ENCODE measurements at regions of chr10 and their contacts with region 1.

Region 1: GRCh38 chr10:35409094-35409582 is 72.8 kb downstream of the CCNY start:
- DNase-seq: peak in 1 of 2 experiments; percentile 30
- H3K4me3 ChIP-seq: no peak overlapping the region
- H3K27ac ChIP-seq: no peak overlapping the region
- H3K4me1 ChIP-seq: peaks cover 26% of the 10 kb centered on the region
- H3K27me3 ChIP-seq: no peaks in the 10 kb centered on the region
- CTCF ChIP-seq: no peak

Region 2: GRCh38 chr10:35372329-35372728 is 36.8 kb before region 1 on chr10:
- CTCF ChIA-PET with region 1: no interaction called
- POLR2A ChIA-PET with region 1: interaction called, 4 read pairs
- intact Hi-C with region 1: loop called (anchors 5 kb)
- DNase-seq: peak in 1 of 2 experiments; percentile 71
- H3K4me3 ChIP-seq: no peak overlapping the region
- H3K27ac ChIP-seq: no peak overlapping the region
- H3K4me1 ChIP-seq: no peaks in the 10 kb centered on the region
- H3K27me3 ChIP-seq: no peaks in the 10 kb centered on the region
- CTCF ChIP-seq: no peak

Region 3: DNA sequence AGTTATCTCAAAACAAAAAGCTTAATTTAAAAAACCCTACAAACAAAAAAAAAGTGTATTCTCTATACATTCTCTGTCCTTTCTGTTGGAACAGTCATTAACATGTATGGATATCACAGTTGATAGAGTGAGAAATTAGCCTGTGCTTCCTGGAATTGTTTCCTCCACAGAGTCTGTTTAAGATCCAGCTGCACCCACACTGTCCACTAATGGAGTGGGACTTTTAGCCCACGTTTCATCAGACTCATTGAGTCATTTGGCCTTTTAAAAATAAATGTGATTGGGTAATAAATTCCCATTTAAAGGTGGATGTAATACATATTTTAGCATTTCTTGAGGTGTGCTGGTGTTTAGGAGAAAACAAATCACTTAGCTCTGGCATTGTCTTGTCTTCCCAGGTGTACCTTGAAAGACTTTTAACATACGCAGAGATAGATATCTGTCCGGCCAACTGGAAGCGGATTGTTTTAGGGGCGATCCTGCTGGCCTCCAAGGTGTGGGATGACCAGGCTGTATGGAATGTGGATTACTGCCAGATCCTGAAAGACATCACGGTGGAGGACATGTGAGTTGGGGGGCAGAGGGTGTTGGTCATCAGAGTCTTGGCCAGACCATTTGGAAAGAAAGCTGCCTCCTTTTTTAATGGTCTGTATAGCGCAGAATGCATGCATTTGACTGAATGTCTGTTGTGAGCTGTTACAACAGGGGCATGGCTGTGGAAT is 143.6 kb after region 1 on chr10:
- CTCF ChIA-PET with region 1: no interaction called
- POLR2A ChIA-PET with region 1: no interaction called
- intact Hi-C with region 1: loop called (anchors 2 kb)
- DNase-seq: peak; percentile 35 to 74
- H3K4me3 ChIP-seq: no peak overlapping the region
- H3K27ac ChIP-seq: no peak overlapping the region
- H3K4me1 ChIP-seq: peaks cover 7% of the 10 kb centered on the region
- H3K27me3 ChIP-seq: no peaks in the 10 kb centered on the region
- CTCF ChIP-seq: no peak

Region 4: DNA sequence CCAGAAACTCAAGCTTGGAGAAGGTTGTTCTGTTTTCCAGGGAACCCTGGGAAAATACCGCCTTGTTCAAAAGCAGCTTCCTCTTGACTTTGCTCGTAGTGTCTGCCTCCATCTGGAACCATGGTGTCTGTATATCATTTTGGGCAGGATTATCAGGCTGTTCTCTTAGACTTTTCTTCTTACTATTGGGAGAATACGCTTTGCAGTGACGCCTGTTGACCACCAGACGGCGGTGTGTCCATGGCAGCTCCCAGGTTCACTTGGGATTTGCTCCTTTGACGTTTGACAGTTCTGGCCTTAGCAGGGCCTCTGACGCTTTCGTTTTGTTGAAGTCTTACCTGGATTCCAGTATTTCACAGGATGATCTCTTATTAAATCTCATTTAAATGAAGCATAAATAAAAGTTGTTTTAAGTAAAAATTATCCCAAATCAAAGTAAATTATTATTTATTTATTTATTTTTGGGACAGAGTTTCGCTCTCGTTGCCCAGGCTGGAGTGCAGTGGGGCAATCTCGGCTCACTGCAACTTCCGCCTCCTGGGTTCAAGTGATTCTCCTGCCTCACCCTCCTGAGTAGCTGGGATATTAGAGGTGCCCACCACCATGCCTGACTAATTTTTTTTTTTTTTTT is 154.2 kb after region 1 on chr10:
- CTCF ChIA-PET with region 1: no interaction called
- POLR2A ChIA-PET with region 1: no interaction called
- intact Hi-C with region 1: loop called (anchors 1 kb)
- DNase-seq: peak in 1 of 2 experiments; percentile 52
- H3K4me3 ChIP-seq: no peak overlapping the region
- H3K27ac ChIP-seq: no peak overlapping the region
- H3K4me1 ChIP-seq: no peaks in the 10 kb centered on the region
- H3K27me3 ChIP-seq: no peaks in the 10 kb centered on the region
- CTCF ChIP-seq: peak; percentile 97

Measured in PC-9 (cell line).